AG04450 (cell line): ENCODE measurements at regions of chr11 and their contacts with region 1.

Region 1: GRCh38 chr11:120801801-120802689 is 221.9 kb upstream of the TBCEL start:
- DNase-seq: peak; percentile 15
- H3K4me3 ChIP-seq: no peak overlapping the region
- H3K27ac ChIP-seq: no peak overlapping the region
- H3K27me3 ChIP-seq: peaks cover 2% of the 10 kb centered on the region
- CTCF ChIP-seq: peak; percentile 95

Region 2: DNA sequence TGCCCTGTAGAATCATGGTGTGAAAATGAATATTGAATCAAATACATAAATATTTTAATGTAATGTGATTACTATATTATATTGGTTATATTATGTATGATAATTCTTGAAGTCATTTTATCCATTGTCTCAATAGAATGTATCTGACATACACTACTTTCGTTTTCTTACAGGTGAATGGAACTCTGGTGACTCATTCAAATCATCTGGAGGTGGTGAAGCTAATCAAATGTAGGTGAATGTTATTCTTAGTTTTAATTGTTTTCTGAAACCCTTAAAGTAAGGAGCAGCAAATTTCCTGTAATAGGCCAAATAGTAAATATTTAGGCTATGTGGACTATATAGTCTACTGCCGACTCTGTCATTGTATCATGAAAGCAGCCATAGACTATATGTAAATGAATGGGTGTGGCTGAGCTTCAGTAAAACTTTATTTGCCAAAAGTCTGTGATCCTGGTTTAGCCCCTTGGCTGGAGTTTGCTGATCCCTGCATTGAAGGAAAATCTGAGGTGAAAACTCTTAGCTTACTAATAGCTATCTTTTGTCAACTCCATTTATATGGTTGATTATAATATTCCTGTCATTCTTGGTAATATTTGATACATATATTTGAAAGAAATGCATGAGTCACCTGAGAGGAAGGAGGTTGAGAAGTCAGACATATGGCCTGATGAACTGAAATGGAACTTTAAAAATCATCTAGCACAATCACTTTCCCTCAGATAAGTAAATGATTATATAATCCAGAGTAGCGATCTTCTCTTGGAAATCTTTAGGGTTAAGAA is 377.7 kb before region 1 on chr11:
- CTCF ChIA-PET with region 1: no interaction called
- POLR2A ChIA-PET with region 1: no interaction called
- DNase-seq: no peak
- H3K4me3 ChIP-seq: no peak overlapping the region
- H3K27ac ChIP-seq: no peak overlapping the region
- H3K27me3 ChIP-seq: no peaks in the 10 kb centered on the region
- CTCF ChIP-seq: no peak

Region 3: GRCh38 chr11:120786206-120786735 is 15.8 kb before region 1 on chr11:
- CTCF ChIA-PET with region 1: interaction called, 10 read pairs
- POLR2A ChIA-PET with region 1: no interaction called
- DNase-seq: no peak
- H3K4me3 ChIP-seq: no peak overlapping the region
- H3K27ac ChIP-seq: no peak overlapping the region
- H3K27me3 ChIP-seq: peaks cover 8% of the 10 kb centered on the region
- CTCF ChIP-seq: no peak